ENCODE measurements at regions of chr10 and their contacts with region 1.

Region 1: DNA sequence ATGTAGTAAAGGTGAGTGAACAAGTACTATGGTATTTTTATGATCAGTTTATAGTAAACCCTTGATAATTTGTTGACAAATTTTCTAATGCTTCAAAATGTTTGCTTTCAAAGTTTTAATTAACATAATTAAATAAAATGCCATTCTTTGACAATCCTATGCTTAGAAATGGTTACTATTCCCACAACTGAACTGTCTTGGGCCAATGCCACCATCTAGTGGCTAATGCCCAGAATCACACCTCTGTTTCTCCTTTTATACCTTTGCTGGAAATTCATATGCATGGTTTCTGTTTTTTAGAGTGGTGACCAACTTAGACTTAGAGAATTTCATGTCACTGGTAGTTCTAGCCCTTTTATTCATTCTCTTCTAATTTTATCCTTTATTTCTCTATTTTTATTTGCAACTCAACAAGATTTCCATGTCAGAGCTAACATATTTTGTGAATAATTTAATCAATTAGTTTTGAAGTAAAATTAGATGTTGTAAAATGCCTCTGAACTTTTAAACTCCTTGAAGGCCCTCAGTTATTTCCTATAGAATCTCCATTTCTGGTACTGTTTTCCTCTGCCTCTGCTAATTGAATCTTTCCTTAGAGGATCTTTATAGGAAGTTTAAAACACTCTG is 31.1 kb downstream of the PCGF5 start:
- DNase-seq: peak in 1 of 3 donors; percentile 62
- ATAC-seq: peak; percentile 82
- H3K4me3 ChIP-seq: no peak overlapping the region
- H3K4me1 ChIP-seq: no peaks in the 10 kb centered on the region
- CTCF ChIP-seq: peak; percentile 64

Region 2: GRCh38 chr10:90912174-90912573 is 339.4 kb before region 1 on chr10:
- intact Hi-C with region 1: loop called in 1 of 2 experiments (anchors 10 kb)
- DNase-seq: no peak
- ATAC-seq: no peak
- H3K4me3 ChIP-seq: no peak overlapping the region
- H3K4me1 ChIP-seq: no peaks in the 10 kb centered on the region
- CTCF ChIP-seq: no peak

Region 3: DNA sequence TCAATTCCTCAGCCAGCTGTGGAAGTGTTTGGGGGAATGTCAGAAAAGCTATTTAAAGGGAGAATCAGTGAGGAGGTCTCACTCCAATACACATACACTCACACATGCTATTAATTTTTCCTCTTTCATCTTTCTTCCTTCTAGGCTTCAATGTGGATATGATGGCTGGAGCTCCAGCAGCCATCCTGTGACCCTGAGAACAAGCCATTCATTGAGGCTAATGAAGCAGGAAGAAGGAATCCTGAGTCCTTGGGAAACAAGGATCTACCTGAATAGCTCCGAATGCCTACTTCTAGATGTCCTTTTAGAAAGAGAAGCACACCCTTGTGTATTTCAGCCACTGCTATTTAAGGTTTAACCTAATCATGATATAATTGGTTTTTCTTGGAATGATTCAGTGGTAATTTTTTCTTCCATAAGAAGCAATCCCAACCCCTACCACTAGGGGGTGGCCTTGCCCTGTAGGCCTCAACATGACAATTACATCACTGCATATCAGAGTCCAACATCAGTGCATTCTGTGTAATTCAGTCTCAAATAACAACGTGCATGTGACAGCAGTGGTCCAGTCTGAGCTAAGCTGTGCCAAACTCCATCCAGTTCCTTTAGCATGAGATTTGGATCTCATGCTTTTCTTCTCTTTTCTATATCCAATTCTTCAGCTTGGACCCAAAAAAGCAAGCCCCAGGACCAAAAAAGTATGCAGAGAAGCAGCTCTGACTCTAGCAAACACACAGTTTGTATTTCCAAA is 245.4 kb before region 1 on chr10:
- intact Hi-C with region 1: loop called in 1 of 2 experiments (anchors 5 kb)
- DNase-seq: peak in 2 of 3 donors; percentile 33 to 83
- ATAC-seq: peak; percentile 94
- H3K4me3 ChIP-seq: no peak overlapping the region
- H3K4me1 ChIP-seq: no peaks in the 10 kb centered on the region
- CTCF ChIP-seq: peak; percentile 91

Region 4: DNA sequence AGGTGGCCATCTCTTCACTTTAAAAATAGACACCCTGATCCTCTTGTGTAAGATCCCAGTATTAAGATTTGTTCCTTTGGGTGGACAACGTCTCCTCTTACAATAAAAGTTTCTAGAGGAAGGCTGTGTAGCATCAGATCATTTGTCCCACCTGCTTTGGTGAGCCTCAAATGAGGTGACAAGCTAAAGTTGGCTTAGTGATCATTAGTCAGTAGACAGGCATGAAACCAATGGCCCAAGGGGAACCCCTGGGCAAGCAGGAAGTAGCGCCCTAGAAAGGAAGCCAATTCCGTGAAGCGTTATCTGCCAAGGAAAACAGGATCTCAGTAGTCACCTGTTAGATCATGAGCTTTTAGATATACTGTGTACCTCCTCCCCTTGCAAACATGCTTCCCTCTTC is 35.7 kb after region 1 on chr10:
- intact Hi-C with region 1: no loop called
- DNase-seq: no peak
- ATAC-seq: peak; percentile 21
- H3K4me3 ChIP-seq: no peak overlapping the region
- H3K4me1 ChIP-seq: no peaks in the 10 kb centered on the region
- CTCF ChIP-seq: no peak